Aorta (tissue), 5 donors: ENCODE measurements at regions of chr3 and their contacts with region 1.

Region 1: DNA sequence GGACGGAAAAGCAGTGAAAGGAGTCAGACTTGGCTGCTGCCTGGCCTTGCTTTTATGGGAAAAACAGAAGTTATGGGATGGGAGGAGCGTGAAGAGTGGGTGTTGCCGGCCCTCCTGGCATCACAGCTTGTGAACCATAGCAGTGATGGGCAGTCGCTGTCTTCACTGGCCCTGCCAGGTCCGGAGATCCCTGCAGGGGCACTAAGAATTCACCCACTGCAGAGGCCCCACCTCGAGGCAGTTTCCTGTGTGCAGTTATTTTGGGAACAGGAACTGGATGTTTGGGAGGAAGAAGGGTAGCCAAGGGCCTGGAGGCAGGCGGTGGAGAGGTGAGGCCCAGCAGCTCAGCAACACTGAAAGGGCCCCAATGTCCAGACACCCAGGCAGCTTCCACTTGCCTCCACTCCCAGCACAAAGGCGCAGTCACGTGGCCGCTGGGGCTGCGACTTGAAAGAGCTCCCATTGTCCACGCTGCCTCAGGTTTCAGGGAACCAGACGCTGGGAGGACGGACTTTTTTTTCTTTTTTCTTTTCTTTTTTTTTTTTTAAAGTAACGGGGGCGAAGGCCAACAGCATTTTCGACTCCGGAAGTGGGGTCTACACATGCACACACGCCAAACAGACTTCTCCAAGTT is 255.6 kb downstream of the ZNF621 start:
- DNase-seq: peak; percentile 88 to 92
- ATAC-seq: peak; percentile 90
- H3K4me3 ChIP-seq: no peak overlapping the region
- H3K27ac ChIP-seq: peak overlapping the region; percentile 31 to 84
- H3K4me1 ChIP-seq: no peaks in the 10 kb centered on the region
- H3K27me3 ChIP-seq: no peaks in the 10 kb centered on the region

Region 2: DNA sequence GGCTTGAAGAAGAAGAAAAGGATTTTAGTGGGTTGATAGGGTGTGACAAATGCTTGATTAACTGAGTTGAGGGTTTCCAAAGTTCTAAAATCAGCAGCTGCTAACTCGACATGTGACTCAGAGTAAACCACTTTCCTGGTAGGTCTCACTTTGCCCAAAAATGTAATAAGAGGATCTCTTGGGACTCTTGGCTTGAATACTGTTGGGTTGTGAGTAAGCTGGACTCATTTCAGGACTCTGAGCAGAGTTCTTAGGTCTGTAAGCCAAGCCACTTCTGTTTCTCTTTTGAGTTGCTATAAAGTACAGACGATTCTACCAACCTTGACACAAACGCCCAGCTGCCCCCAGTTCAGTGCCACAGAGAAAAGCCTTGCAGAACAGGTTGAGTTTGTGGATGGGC is 14.5 kb before region 1 on chr3:
- intact Hi-C with region 1: loop called in 1 of 2 experiments (anchors 2 kb)
- DNase-seq: no peak
- ATAC-seq: peak; percentile 88
- H3K4me3 ChIP-seq: no peak overlapping the region
- H3K27ac ChIP-seq: peak overlapping the region in 1 of 2 donors; percentile 1
- H3K4me1 ChIP-seq: peaks cover 2 to 5% of the 10 kb centered on the region in 2 donors
- H3K27me3 ChIP-seq: no peaks in the 10 kb centered on the region

Region 3: GRCh38 chr3:40850861-40851260 is 70.5 kb after region 1 on chr3:
- intact Hi-C with region 1: loop called in 1 of 2 experiments (anchors 5 kb)
- DNase-seq: no peak
- ATAC-seq: no peak
- H3K4me3 ChIP-seq: no peak overlapping the region
- H3K27ac ChIP-seq: no peak overlapping the region
- H3K4me1 ChIP-seq: peaks cover 0 to 2% of the 10 kb centered on the region in 2 donors
- H3K27me3 ChIP-seq: no peaks in the 10 kb centered on the region

Region 4: DNA sequence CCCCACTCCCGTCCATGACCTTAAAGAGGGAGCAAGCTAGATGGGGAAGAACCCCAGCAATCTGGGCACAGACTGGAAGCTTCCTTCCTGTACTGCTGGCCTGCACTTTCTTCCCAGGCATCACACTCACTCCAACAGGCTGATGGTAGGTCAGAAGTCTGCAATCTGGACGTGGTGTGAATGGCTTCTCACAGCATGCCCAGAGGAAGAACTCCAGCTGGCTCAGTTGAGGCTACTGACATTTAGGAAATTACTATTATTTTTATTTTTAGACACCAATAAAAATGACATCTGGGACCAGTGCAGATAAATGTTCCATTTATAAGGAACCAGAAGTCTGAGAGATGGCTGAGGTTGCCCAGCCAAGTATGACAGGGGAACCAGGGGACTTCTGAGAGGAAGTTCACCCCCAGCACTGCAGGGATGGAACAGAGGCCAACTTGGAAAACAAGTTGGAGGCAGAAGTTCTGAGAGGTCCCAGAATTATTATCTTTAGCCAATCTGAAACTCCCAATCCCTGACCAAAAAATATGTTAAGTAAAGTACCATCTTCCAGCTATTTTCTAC is 255.1 kb after region 1 on chr3:
- intact Hi-C with region 1: no loop called
- DNase-seq: no peak
- ATAC-seq: no peak
- H3K4me3 ChIP-seq: no peak overlapping the region
- H3K27ac ChIP-seq: no peak overlapping the region
- H3K4me1 ChIP-seq: no peaks in the 10 kb centered on the region
- H3K27me3 ChIP-seq: peaks cover 0 to 3% of the 10 kb centered on the region in 2 donors

Region 5: DNA sequence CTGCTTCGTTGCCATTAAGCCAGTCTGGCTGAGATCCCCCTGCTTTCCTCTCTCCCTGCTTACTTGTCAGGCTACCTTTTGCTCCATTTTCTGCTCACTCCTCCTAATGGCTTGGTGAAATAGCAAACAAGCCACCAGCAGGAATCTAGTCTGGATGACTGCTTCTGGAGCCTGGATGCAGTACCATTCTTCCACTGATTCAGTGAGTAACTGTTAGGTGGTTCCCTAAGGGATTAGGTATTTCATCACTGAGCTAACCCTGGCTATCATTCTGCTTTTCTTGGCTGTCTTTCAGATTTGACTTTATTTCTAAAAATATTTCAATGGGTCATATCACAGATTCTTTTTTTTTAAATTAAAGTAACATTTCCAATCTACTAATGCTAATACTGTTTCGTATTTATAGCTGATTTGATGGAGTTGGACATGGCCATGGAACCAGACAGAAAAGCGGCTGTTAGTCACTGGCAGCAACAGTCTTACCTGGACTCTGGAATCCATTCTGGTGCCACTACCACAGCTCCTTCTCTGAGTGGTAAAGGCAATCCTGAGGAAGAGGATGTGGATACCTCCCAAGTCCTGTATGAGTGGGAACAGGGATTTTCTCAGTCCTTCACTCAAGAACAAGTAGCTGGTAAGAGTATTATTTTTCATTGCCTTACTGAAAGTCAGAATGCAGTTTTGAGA is 443.9 kb after region 1 on chr3:
- intact Hi-C with region 1: loop called in 1 of 2 experiments (anchors 10 kb)
- DNase-seq: no peak
- ATAC-seq: peak; percentile 94
- H3K4me3 ChIP-seq: no peak overlapping the region
- H3K27ac ChIP-seq: peak overlapping the region in 1 of 2 donors; percentile 78
- H3K4me1 ChIP-seq: peaks cover 11% of the 10 kb centered on the region in 2 donors
- H3K27me3 ChIP-seq: no peaks in the 10 kb centered on the region